ENCODE measurements at regions of chr5 and their contacts with region 1.

Region 1: DNA sequence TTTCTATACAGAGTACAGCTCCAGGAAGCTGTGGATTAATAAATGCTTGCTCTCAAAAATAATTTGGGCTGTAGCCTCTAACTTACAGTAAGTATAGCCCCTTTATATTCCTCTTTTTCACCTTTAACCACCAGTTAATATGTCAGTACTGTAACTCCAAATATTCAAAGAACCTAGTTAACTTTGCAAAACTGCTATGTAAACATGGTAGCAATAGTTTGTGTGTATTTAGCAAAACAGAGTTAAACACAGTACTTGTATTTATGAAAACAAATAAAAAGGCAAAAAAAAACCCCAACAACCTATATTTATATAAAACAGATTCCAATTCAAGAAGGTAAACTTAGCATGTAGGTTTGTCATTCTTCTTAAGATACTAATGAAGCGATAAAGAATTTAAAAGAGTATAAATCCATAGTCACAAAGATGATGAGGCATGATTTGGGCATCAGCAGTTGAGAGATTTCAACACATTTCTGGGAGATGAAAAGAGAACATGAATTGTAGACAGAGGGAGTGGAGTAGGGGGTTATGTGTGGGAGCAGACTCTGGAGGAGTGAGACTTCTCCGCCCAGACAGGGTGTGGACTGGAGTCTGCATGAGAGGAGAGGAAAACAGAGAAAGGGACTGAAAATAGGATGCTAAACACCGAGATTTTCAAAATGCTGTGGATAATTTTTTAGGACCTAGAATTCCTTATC is 47.0 kb upstream of the F2RL1 start:
- DNase-seq: no peak
- ATAC-seq: no peak
- H3K4me3 ChIP-seq: no peak overlapping the region
- H3K27ac ChIP-seq: no peak overlapping the region
- H3K4me1 ChIP-seq: peaks cover 4% of the 10 kb centered on the region; the same call in 1 of the 2 replicates
- H3K27me3 ChIP-seq: no peaks in the 10 kb centered on the region
- CTCF ChIP-seq: no peak

Region 2: GRCh38 chr5:76441890-76442713 is 329.8 kb before region 1 on chr5:
- CTCF ChIA-PET with region 1: no interaction called
- POLR2A ChIA-PET with region 1: interaction called, 10 read pairs
- in situ Hi-C with region 1: no loop called
- intact Hi-C with region 1: no loop called
- DNase-seq: no peak
- ATAC-seq: no peak
- H3K4me3 ChIP-seq: no peak overlapping the region
- H3K27ac ChIP-seq: no peak overlapping the region
- H3K4me1 ChIP-seq: no peaks in the 10 kb centered on the region
- H3K27me3 ChIP-seq: peaks cover 9% of the 10 kb centered on the region; the same call in 1 of the 2 replicates
- CTCF ChIP-seq: no peak

Region 3: DNA sequence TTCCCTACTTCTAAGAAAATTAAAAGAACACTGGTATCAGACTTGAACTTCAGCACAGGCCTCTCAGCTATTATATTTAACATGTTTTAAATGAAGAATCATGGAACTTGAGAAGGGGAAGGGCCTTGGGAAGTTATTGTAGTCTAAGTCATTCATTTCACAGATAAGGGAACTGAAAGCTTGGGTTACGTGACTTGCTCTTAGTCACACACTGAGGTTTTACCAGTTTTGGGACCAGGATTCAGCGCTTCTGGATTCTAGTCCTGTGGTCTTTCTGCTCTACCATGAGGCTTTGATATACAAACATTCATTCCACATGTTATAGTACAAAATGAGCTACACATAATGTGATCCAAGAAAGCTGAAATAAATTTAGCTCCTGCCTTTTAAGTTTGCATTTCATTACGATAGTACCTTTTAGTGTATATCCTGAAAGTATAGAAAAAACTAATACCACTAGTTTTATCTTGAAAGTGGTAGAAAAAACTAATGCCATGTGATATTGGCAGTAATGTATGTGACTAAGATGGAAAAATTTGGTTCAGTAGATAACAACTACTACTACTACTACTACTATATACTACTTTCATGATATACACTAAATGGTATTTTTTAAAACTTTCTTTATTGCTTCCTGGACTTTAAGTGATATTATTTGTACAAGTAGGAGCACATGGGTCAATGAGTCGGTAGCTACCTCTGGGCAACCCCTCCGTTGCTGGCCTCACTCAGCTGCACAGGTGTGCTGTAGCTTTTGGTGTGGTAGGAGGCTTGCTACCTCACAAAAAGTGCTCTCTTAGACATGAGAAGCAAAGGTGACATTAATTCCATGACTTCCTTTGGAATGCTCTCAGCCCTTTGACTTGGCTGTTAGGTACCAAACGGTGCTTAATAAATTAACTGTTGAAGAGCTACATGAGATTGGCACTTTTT is 189.4 kb before region 1 on chr5:
- CTCF ChIA-PET with region 1: interaction called, 10 read pairs
- POLR2A ChIA-PET with region 1: no interaction called
- in situ Hi-C with region 1: no loop called
- intact Hi-C with region 1: no loop called
- DNase-seq: no peak
- ATAC-seq: no peak
- H3K4me3 ChIP-seq: no peak overlapping the region
- H3K27ac ChIP-seq: no peak overlapping the region
- H3K4me1 ChIP-seq: no peaks in the 10 kb centered on the region
- H3K27me3 ChIP-seq: peaks cover 16% of the 10 kb centered on the region; the same call in 1 of the 2 replicates
- CTCF ChIP-seq: no peak

Region 4: GRCh38 chr5:76601470-76601869 is 170.4 kb before region 1 on chr5:
- CTCF ChIA-PET with region 1: interaction called, 13 read pairs
- POLR2A ChIA-PET with region 1: no interaction called
- in situ Hi-C with region 1: no loop called
- intact Hi-C with region 1: loop called (anchors 2 kb)
- DNase-seq: no peak
- ATAC-seq: peak; percentile 84
- H3K4me3 ChIP-seq: no peak overlapping the region
- H3K27ac ChIP-seq: no peak overlapping the region
- H3K4me1 ChIP-seq: no peaks in the 10 kb centered on the region
- H3K27me3 ChIP-seq: no peaks in the 10 kb centered on the region
- CTCF ChIP-seq: peak; percentile 72

Region 5: GRCh38 chr5:76785487-76785886 is 13.6 kb after region 1 on chr5:
- CTCF ChIA-PET with region 1: interaction called, 12 read pairs
- POLR2A ChIA-PET with region 1: no interaction called
- in situ Hi-C with region 1: no loop called
- intact Hi-C with region 1: no loop called
- DNase-seq: no peak
- ATAC-seq: peak; percentile 60
- H3K4me3 ChIP-seq: no peak overlapping the region
- H3K27ac ChIP-seq: no peak overlapping the region
- H3K4me1 ChIP-seq: peaks cover 11% of the 10 kb centered on the region
- H3K27me3 ChIP-seq: no peaks in the 10 kb centered on the region
- CTCF ChIP-seq: no peak

Region 6: GRCh38 chr5:76790632-76791290 is 18.9 kb after region 1 on chr5:
- CTCF ChIA-PET with region 1: interaction called, 12 read pairs
- POLR2A ChIA-PET with region 1: no interaction called
- in situ Hi-C with region 1: no loop called
- intact Hi-C with region 1: no loop called
- DNase-seq: peak; percentile 98
- ATAC-seq: peak; percentile 89
- H3K4me3 ChIP-seq: no peak overlapping the region
- H3K27ac ChIP-seq: peak overlapping the region; percentile 91
- H3K4me1 ChIP-seq: peaks cover 22% of the 10 kb centered on the region
- H3K27me3 ChIP-seq: no peaks in the 10 kb centered on the region
- CTCF ChIP-seq: no peak

Region 7: DNA sequence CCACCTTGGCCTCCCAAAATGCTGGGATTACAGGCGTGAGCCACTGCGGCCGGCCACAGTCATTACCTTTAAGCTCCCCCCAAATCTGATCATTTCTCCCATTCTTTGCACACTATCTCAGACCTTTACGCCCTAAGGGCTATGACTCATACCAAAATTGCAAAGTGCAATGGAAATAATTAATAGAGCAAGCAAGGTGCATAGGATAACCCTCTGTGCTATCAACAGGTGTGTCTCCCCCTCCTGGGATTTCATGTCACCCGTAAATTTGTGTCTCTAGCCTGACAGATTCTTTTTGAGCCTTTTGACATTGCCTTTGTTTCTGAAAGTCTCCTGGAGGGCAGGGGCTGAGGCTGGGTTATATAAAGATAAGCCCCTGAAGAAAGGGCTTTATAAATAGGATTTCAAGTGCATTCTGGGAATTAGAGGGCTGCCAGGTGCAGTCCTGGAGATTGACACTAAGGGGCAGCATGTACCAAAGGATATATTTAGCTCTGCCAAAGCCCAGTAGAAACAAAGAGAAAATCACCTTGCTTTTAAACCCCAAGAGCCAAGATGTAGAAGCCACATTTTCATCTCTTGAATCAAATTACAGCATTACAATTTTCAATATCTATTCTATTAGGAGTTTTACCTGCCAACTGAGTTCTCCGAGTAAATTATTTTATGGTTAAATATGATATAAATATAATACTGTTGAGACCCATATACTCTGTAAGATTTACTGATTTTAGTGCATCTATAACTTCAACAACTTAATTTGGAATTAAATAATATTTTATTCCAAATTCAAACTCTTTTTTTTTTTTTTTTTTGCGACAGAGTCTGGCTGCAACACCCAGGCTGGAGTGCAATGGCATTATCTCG is 96.2 kb after region 1 on chr5:
- CTCF ChIA-PET with region 1: no interaction called
- POLR2A ChIA-PET with region 1: no interaction called
- in situ Hi-C with region 1: no loop called
- intact Hi-C with region 1: no loop called
- DNase-seq: peak; percentile 75
- ATAC-seq: peak; percentile 83
- H3K4me3 ChIP-seq: no peak overlapping the region
- H3K27ac ChIP-seq: no peak overlapping the region
- H3K4me1 ChIP-seq: peaks cover 3% of the 10 kb centered on the region; the same call in 1 of the 2 replicates
- H3K27me3 ChIP-seq: no peaks in the 10 kb centered on the region
- CTCF ChIP-seq: peak; percentile 88

Measured in Panc1 (cell line).